ENCODE measurements at regions of chr13 and their contacts with region 1.

Region 1: DNA sequence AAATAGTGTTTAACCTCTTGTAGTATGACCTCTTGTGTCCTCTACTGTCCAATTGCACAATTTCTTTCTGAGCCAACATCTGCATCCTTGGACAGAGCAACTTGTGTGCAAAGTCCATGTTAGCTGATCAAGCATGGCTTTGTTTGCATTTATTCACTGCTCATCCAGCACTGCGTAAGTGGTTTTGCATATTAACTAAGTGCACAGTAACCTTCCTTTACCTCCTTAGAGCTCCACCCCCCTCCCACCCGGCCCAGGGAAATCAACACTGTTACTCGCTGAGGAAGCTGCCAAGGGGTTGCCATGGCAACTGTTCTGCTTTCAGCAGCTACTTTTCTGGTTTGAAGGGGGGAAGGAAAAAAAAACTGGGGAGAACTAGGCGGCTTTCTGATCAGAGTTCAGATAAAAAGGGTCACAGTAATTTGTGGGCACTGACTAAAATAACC is 153.5 kb upstream of the KLF12 start:
- DNase-seq: peak; percentile 64 to 98 (median 85)
- ATAC-seq: peak; percentile 67
- H3K4me3 ChIP-seq: peak overlapping the region; percentile 27 to 35
- H3K4me3 Mint-ChIP-seq: peak overlapping the region; percentile 74
- H3K27ac ChIP-seq: peak overlapping the region; percentile 48 to 82
- H3K27ac Mint-ChIP-seq: peak overlapping the region; percentile 93
- H3K4me1 ChIP-seq: peaks cover 45% of the 10 kb centered on the region
- H3K4me1 Mint-ChIP-seq: peaks cover 62% of the 10 kb centered on the region
- H3K27me3 ChIP-seq: no peaks in the 10 kb centered on the region
- H3K27me3 Mint-ChIP-seq: no peaks in the 10 kb centered on the region
- CTCF ChIP-seq: no peak

Region 2: DNA sequence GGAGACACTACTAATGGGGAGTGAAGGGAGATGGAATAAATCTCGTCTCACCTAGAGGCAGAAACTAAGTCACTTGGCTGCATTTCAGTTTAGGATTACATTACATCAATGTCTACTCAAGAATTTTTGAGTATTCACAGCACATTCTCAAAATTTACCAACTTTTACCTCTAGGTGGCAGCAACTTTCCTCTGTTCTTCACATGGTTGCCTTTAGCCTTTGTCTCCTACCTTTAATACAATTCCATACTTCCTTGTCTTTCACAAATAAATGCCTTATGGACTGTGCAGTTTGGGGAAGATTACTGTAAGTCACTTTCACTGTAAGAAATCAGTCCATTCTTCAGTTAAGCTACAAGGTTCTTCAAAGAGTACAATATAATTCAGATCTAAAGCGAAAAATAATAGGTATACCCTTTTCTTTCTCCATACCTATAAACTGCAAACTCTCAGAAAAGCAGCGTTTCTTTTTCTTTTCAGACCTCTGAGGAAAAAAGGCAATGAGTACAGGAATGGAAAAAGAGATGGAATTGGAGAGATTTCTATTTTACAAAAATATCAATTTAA is 532.9 kb before region 1 on chr13:
- CTCF ChIA-PET with region 1: interaction called, 19 read pairs
- POLR2A ChIA-PET with region 1: interaction called, 4 read pairs
- intact Hi-C with region 1: loop called (anchors 1 to 2 kb)
- DNase-seq: peak in 3 of 9 experiments; percentile 38 to 75 (median 66)
- ATAC-seq: peak; percentile 62
- H3K4me3 ChIP-seq: no peak overlapping the region
- H3K4me3 Mint-ChIP-seq: no peak overlapping the region
- H3K27ac ChIP-seq: peak overlapping the region in 1 of 2 experiments; percentile 16
- H3K27ac Mint-ChIP-seq: peak overlapping the region; percentile 84
- H3K4me1 ChIP-seq: peaks cover 43% of the 10 kb centered on the region
- H3K4me1 Mint-ChIP-seq: peaks cover 53% of the 10 kb centered on the region
- H3K27me3 ChIP-seq: no peaks in the 10 kb centered on the region
- H3K27me3 Mint-ChIP-seq: no peaks in the 10 kb centered on the region
- CTCF ChIP-seq: peak; percentile 97

Region 3: DNA sequence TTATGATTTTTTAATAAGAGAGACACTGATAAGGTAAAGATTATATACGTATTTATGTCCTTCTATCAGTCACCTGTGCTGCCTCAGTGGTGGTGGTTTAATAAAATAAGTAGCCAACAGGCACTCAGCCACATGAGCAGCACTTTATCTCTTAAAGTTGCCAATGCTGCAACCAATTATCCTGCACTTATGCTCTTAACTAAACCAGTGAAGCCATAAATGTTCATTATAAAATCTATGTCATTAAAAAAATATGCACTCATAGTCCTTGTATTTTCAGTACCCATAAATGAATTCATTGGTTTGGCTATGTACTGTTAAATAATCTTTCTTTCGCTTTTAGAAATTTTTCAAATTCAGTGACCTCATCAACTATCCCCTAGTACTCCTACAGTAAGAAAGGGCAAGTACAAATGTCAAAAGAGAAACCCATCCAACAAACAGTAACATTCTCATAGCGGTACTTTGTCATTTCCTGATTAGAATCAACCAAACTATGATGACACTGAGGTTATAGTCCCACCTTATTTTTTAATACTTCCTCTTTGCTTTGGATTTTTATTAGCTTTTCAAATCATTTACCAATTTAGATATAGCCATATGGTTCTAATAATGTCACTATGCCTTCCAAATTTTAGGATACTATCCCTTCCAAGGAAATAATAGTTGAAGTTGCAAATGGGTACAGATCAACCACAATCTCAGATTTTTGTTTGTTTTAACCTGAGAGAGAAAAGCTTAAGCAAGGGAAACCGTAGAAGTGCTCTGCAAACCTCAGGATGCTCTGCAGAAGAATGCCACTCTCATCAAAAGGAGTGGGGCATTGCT is 344.4 kb before region 1 on chr13:
- CTCF ChIA-PET with region 1: interaction called, 9 read pairs
- POLR2A ChIA-PET with region 1: interaction called, 4 read pairs
- intact Hi-C with region 1: loop called (anchors 1 to 5 kb)
- DNase-seq: peak in 2 of 9 experiments; percentile 57 to 78
- ATAC-seq: peak; percentile 93
- H3K4me3 ChIP-seq: no peak overlapping the region
- H3K4me3 Mint-ChIP-seq: peak overlapping the region; percentile 16
- H3K27ac ChIP-seq: peak overlapping the region; percentile 37 to 75
- H3K27ac Mint-ChIP-seq: peak overlapping the region; percentile 93
- H3K4me1 ChIP-seq: peaks cover 53% of the 10 kb centered on the region
- H3K4me1 Mint-ChIP-seq: peaks cover 80% of the 10 kb centered on the region
- H3K27me3 ChIP-seq: no peaks in the 10 kb centered on the region
- H3K27me3 Mint-ChIP-seq: no peaks in the 10 kb centered on the region
- CTCF ChIP-seq: no peak

Region 4: GRCh38 chr13:74062933-74063332 is 224.8 kb before region 1 on chr13:
- CTCF ChIA-PET with region 1: interaction called, 15 read pairs
- POLR2A ChIA-PET with region 1: interaction called, 8 read pairs
- intact Hi-C with region 1: loop called in 1 of 2 experiments (anchors 2 kb)
- DNase-seq: peak in 5 of 9 experiments; percentile 10 to 66 (median 30)
- ATAC-seq: peak; percentile 16
- H3K4me3 ChIP-seq: no peak overlapping the region
- H3K4me3 Mint-ChIP-seq: peak overlapping the region; percentile 30
- H3K27ac ChIP-seq: peak overlapping the region in 1 of 2 experiments; percentile 76
- H3K27ac Mint-ChIP-seq: peak overlapping the region; percentile 81
- H3K4me1 ChIP-seq: peaks cover 55% of the 10 kb centered on the region
- H3K4me1 Mint-ChIP-seq: peaks cover 85% of the 10 kb centered on the region
- H3K27me3 ChIP-seq: no peaks in the 10 kb centered on the region
- H3K27me3 Mint-ChIP-seq: no peaks in the 10 kb centered on the region
- CTCF ChIP-seq: no peak

Region 5: DNA sequence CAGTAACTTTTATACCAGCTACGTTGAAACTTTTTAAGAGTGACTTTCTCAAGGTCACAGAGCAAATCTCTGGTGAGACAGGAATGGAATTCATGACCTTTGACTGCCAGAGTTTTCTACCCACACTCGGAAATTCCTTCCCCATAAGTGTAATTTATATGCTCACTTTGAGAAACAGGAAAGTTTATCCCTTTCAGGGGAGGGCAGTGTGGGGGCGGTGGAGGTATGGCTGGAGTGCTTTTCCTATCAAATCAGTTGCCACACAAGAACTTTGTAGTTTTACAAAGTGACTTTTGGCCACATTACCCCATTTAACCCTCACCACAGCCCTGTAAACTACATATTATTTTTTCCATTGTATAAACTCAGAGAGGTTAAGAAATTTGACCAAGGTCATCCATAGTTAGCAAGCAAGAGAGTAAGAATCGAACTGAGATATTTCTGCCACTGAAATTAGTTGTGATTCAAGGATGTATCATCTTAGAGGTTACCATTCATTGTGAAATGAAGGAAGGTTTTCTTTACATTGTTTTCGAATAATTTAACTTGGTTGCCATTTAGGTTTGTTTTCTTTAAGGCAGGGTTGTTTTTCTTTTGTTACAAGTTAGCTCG is 159.5 kb before region 1 on chr13:
- CTCF ChIA-PET with region 1: interaction called, 128 read pairs
- POLR2A ChIA-PET with region 1: interaction called, 104 read pairs
- intact Hi-C with region 1: loop called in 1 of 2 experiments (anchors 1 kb)
- DNase-seq: no peak
- ATAC-seq: no peak
- H3K4me3 ChIP-seq: no peak overlapping the region
- H3K4me3 Mint-ChIP-seq: peak overlapping the region; percentile 47
- H3K27ac ChIP-seq: peak overlapping the region in 1 of 2 experiments; percentile 82
- H3K27ac Mint-ChIP-seq: peak overlapping the region; percentile 84
- H3K4me1 ChIP-seq: peaks cover 49% of the 10 kb centered on the region
- H3K4me1 Mint-ChIP-seq: peaks cover 79% of the 10 kb centered on the region
- H3K27me3 ChIP-seq: no peaks in the 10 kb centered on the region
- H3K27me3 Mint-ChIP-seq: no peaks in the 10 kb centered on the region
- CTCF ChIP-seq: no peak

Region 6: GRCh38 chr13:74246487-74246886 is 41.3 kb before region 1 on chr13:
- CTCF ChIA-PET with region 1: interaction called, 22 read pairs
- POLR2A ChIA-PET with region 1: interaction called, 4 read pairs
- intact Hi-C with region 1: loop called (anchors 2 kb)
- DNase-seq: peak in 6 of 9 experiments; percentile 14 to 51 (median 32)
- ATAC-seq: no peak
- H3K4me3 ChIP-seq: peak overlapping the region; percentile 6 to 12
- H3K4me3 Mint-ChIP-seq: peak overlapping the region; percentile 67
- H3K27ac ChIP-seq: peak overlapping the region; percentile 37 to 82
- H3K27ac Mint-ChIP-seq: peak overlapping the region; percentile 98
- H3K4me1 ChIP-seq: peaks cover 85% of the 10 kb centered on the region
- H3K4me1 Mint-ChIP-seq: peaks cover 94% of the 10 kb centered on the region
- H3K27me3 ChIP-seq: no peaks in the 10 kb centered on the region
- H3K27me3 Mint-ChIP-seq: no peaks in the 10 kb centered on the region
- CTCF ChIP-seq: no peak

Region 7: DNA sequence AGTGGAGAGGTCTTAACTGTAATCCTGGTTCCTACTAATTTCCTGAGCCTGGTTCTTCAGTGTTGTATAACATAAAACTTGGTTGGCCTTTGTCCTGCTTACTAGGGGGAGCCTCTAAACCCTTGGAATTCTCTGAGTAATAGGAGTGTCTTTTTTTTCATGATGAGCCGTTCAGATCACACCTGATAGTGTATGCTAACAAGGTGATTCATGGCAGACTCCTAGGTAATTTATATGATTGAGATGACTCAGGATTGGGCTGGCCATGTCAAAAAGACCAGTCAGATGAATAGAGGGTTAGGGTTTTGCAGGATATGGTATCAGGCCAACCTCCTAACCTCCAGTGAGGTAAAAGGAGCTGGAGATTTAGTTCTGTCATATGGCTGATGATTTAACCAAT is 17.7 kb before region 1 on chr13:
- CTCF ChIA-PET with region 1: interaction called, 14 read pairs
- POLR2A ChIA-PET with region 1: interaction called, 6 read pairs
- intact Hi-C with region 1: no loop called
- DNase-seq: no peak
- ATAC-seq: no peak
- H3K4me3 ChIP-seq: no peak overlapping the region
- H3K4me3 Mint-ChIP-seq: no peak overlapping the region
- H3K27ac ChIP-seq: no peak overlapping the region
- H3K27ac Mint-ChIP-seq: no peak overlapping the region
- H3K4me1 ChIP-seq: peaks cover 4% of the 10 kb centered on the region
- H3K4me1 Mint-ChIP-seq: peaks cover 34% of the 10 kb centered on the region
- H3K27me3 ChIP-seq: no peaks in the 10 kb centered on the region
- H3K27me3 Mint-ChIP-seq: no peaks in the 10 kb centered on the region
- CTCF ChIP-seq: no peak

Region 8: DNA sequence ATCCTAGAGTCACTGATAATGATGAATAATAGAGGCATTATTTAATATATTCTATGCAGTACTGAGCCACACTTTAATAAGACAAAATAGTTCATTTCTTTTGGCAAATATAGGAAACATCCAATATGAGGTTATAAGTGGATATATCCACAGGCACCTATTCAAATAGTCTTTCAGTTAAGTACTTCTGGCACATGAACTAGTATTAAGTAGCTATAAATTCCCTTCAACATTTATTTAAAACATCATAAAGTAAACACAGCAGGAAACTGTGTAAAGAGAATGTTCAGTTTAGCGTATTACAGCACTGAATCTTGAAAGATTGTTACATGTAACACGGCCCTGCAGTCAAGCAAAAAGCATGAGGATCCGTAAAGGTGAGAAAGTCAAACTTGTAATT is 309.8 kb after region 1 on chr13:
- CTCF ChIA-PET with region 1: no interaction called
- POLR2A ChIA-PET with region 1: no interaction called
- intact Hi-C with region 1: no loop called
- DNase-seq: no peak
- ATAC-seq: no peak
- H3K4me3 ChIP-seq: no peak overlapping the region
- H3K4me3 Mint-ChIP-seq: no peak overlapping the region
- H3K27ac ChIP-seq: no peak overlapping the region
- H3K27ac Mint-ChIP-seq: no peak overlapping the region
- H3K4me1 ChIP-seq: no peaks in the 10 kb centered on the region
- H3K4me1 Mint-ChIP-seq: no peaks in the 10 kb centered on the region
- H3K27me3 ChIP-seq: no peaks in the 10 kb centered on the region
- H3K27me3 Mint-ChIP-seq: peaks cover 15% of the 10 kb centered on the region
- CTCF ChIP-seq: no peak